BJ (cell line): ENCODE measurements at regions of chr15 and their contacts with region 1.

Region 1: GRCh38 chr15:75801859-75802593 is 41.2 kb upstream of the UBE2Q2 start:
- DNase-seq: no peak
- H3K4me3 ChIP-seq: peak overlapping the region; percentile 32
- H3K27me3 ChIP-seq: peaks cover 15% of the 10 kb centered on the region
- CTCF ChIP-seq: peak; percentile 90

Region 2: GRCh38 chr15:75684642-75685041 is 117.4 kb before region 1 on chr15:
- CTCF ChIA-PET with region 1: interaction called, 48 read pairs
- POLR2A ChIA-PET with region 1: no interaction called
- DNase-seq: no peak
- H3K4me3 ChIP-seq: no peak overlapping the region
- H3K27me3 ChIP-seq: no peaks in the 10 kb centered on the region
- CTCF ChIP-seq: no peak

Region 3: GRCh38 chr15:75723847-75724660 is 78.0 kb before region 1 on chr15:
- CTCF ChIA-PET with region 1: interaction called, 20 read pairs
- POLR2A ChIA-PET with region 1: no interaction called
- DNase-seq: peak; percentile 74
- H3K4me3 ChIP-seq: no peak overlapping the region
- H3K27me3 ChIP-seq: no peaks in the 10 kb centered on the region
- CTCF ChIP-seq: no peak

Region 4: GRCh38 chr15:75776065-75776423 is 26.0 kb before region 1 on chr15:
- CTCF ChIA-PET with region 1: interaction called, 12 read pairs
- POLR2A ChIA-PET with region 1: no interaction called
- DNase-seq: no peak
- H3K4me3 ChIP-seq: no peak overlapping the region
- H3K27me3 ChIP-seq: peaks cover 3% of the 10 kb centered on the region
- CTCF ChIP-seq: no peak

Region 5: DNA sequence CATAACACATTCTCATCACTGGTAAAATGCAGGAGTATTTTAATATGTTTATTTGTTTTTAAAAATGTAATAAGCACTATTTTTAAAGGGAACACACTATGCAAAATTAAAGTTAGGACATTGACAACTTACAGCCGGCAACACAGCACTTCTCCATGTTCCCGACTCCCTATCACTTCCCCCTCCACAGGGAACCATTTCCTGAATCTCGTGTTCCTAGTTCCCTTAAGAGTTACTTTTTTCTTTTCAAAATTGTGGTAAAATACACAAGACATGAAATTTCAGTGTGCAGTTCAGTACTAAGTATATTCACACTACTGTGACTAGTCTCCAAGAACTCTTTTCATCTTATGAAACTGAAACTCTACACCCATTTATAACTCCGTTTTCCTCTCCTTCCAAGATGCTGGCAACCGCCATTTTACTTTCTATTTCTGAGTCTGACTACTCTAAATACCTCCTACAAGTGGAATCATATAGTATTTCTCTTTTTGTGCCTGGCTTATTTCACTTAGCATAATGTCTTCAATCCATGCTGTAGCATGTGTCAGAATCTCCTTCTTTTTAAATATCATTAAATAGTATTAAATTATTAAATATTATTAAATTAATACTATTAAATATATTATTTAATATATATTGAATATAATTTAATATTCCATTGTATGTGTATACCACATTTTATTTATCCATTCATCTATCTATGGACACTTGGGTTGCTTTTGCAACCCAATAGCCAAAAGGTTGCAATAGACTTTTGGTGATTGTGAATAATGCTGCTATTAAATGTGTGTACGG is 15.3 kb after region 1 on chr15:
- CTCF ChIA-PET with region 1: interaction called, 12 read pairs
- POLR2A ChIA-PET with region 1: no interaction called
- DNase-seq: no peak
- H3K4me3 ChIP-seq: no peak overlapping the region
- H3K27me3 ChIP-seq: no peaks in the 10 kb centered on the region; the same call in 1 of the 2 replicates
- CTCF ChIP-seq: no peak

Region 6: DNA sequence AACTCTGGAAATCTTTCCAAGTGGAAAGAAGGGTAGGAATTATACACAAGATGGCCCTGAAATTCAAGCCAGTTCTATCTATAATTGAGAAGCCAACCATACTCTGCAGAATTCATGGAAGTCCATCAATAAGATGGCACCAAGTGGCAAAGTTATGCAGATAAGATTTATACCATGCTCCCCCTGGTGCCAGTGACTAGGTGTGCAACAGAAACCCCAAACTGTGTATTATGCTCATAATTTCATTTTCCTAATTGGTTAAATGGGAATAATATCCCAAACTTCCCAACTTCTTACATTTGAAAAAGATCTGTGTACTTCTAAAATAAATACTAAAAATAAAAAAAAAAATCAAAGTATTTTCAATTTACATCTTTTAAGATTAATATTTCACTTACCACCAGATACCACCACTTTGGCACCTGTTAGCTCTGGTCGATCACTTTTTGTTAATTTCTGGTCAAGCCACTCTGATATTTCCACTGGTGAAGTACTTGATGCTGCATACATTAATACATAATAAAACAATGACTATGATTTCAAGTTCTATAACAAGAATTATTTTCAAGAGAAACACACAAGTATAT is 483.3 kb after region 1 on chr15:
- CTCF ChIA-PET with region 1: no interaction called
- POLR2A ChIA-PET with region 1: no interaction called
- DNase-seq: no peak
- H3K4me3 ChIP-seq: no peak overlapping the region
- H3K27me3 ChIP-seq: no peaks in the 10 kb centered on the region
- CTCF ChIP-seq: peak; percentile 55